Naive thymus-derived CD4-positive, alpha-beta T cell (primary cell): ENCODE measurements at regions of chr3 and their contacts with region 1.

Region 1: DNA sequence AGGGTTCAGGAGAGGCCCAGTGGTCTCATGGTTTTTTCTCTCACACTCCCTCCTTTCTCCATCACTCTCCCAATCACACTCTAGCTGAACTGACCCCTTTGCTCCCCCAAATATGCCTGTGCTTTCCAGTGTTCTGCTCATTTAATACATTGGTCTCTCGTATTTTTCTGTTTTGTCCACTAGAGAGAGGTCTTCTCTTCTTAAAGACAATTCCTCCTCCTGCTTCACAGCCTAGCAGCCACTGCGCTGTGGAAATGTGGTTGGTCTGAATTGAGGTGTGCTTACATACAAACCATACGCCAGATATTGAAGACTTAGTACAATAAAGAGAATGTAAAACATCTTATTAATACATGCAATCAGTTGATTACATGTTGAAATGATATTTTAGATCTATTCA is 60.6 kb upstream of the XCR1 start:
- DNase-seq: no peak
- ATAC-seq: no peak
- H3K4me3 ChIP-seq: no peak overlapping the region
- H3K4me3 Mint-ChIP-seq: no peak overlapping the region
- H3K27ac ChIP-seq: no peak overlapping the region
- H3K27ac Mint-ChIP-seq: no peak overlapping the region
- H3K4me1 ChIP-seq: peaks cover 0 to 7% of the 10 kb centered on the region in 2 donors
- H3K4me1 Mint-ChIP-seq: peaks cover 0 to 52% (median 0%) of the 10 kb centered on the region in 7 donors
- H3K27me3 ChIP-seq: no peaks in the 10 kb centered on the region
- H3K27me3 Mint-ChIP-seq: peaks cover 0 to 28% (median 0%) of the 10 kb centered on the region in 5 donors

Region 2: GRCh38 chr3:46208167-46208704 is 120.4 kb after region 1 on chr3 and contains the start of gene CCR1:
- CTCF ChIA-PET with region 1: no interaction called
- POLR2A ChIA-PET with region 1: no interaction called
- intact Hi-C with region 1: loop called in 1 of 2 experiments (anchors 1 kb)
- DNase-seq: peak in 2 of 9 donors; percentile 0 to 64
- ATAC-seq: peak; percentile 72
- H3K4me3 ChIP-seq: no peak within 1 kb of the TSS
- H3K4me3 Mint-ChIP-seq: peak within 1 kb of the TSS in 4 of 10 donors; percentile 8 to 72 (median 41)
- H3K27ac ChIP-seq: no peak within 1 kb of the TSS
- H3K27ac Mint-ChIP-seq: peak within 1 kb of the TSS in 8 of 9 donors; percentile 5 to 93 (median 57)
- H3K4me1 ChIP-seq: peaks cover 13 to 44% of the 10 kb centered on the region in 2 donors
- H3K4me1 Mint-ChIP-seq: peaks cover 8 to 64% (median 24%) of the 10 kb centered on the region in 7 donors
- H3K27me3 ChIP-seq: no peaks in the 10 kb centered on the region
- H3K27me3 Mint-ChIP-seq: peaks cover 0 to 2% (median 0%) of the 10 kb centered on the region in 5 donors
- total RNA-seq, gene CCR1: 2.2 to 27.6 (median 4.5) TPM

Region 3: GRCh38 chr3:46378426-46378942 is 290.6 kb after region 1 on chr3:
- CTCF ChIA-PET with region 1: interaction called, 5 read pairs
- POLR2A ChIA-PET with region 1: no interaction called
- intact Hi-C with region 1: loop called in 1 of 2 experiments (anchors 1 kb)
- DNase-seq: peak; percentile 24 to 67 (median 46)
- ATAC-seq: peak; percentile 68
- H3K4me3 ChIP-seq: no peak overlapping the region
- H3K4me3 Mint-ChIP-seq: peak overlapping the region in 1 of 10 donors; percentile 8
- H3K27ac ChIP-seq: no peak overlapping the region
- H3K27ac Mint-ChIP-seq: peak overlapping the region in 2 of 9 donors; percentile 0 to 4
- H3K4me1 ChIP-seq: peaks cover 3 to 40% of the 10 kb centered on the region in 2 donors
- H3K4me1 Mint-ChIP-seq: peaks cover 23 to 48% (median 43%) of the 10 kb centered on the region in 7 donors
- H3K27me3 ChIP-seq: no peaks in the 10 kb centered on the region
- H3K27me3 Mint-ChIP-seq: peaks cover 0 to 24% (median 0%) of the 10 kb centered on the region in 5 donors